Activated CD4-positive, alpha-beta T cell treated with anti-CD3 and anti-CD28 coated beads for 36 hours (primary cell): ENCODE measurements at regions of chr6 and their contacts with region 1.

Region 1: GRCh38 chr6:20919677-20920385 is 385.6 kb downstream of the CDKAL1 start:
- DNase-seq: peak; percentile 35
- ATAC-seq: peak; percentile 94
- H3K4me3 Mint-ChIP-seq: no peak overlapping the region
- H3K27ac Mint-ChIP-seq: peak overlapping the region; percentile 49
- H3K4me1 Mint-ChIP-seq: peaks cover 23% of the 10 kb centered on the region
- H3K27me3 Mint-ChIP-seq: no peaks in the 10 kb centered on the region

Region 2: GRCh38 chr6:20534295-20535262 is 385.3 kb before region 1 on chr6 and contains the start of gene CDKAL1:
- CTCF ChIA-PET with region 1: no interaction called
- POLR2A ChIA-PET with region 1: no interaction called
- intact Hi-C with region 1: loop called in 1 of 2 experiments (anchors 2 kb)
- DNase-seq: peak; percentile 94
- ATAC-seq: peak; percentile 89
- H3K4me3 Mint-ChIP-seq: peak within 1 kb of the TSS; percentile 94
- H3K27ac Mint-ChIP-seq: peak within 1 kb of the TSS; percentile 97
- H3K4me1 Mint-ChIP-seq: peaks cover 36% of the 10 kb centered on the region
- H3K27me3 Mint-ChIP-seq: no peaks in the 10 kb centered on the region
- total RNA-seq, gene CDKAL1: 22.1 to 23.4 TPM

Region 3: GRCh38 chr6:20582586-20583446 is 337.0 kb before region 1 on chr6:
- CTCF ChIA-PET with region 1: no interaction called
- POLR2A ChIA-PET with region 1: no interaction called
- intact Hi-C with region 1: loop called in 1 of 2 experiments (anchors 5 kb)
- DNase-seq: no peak
- ATAC-seq: peak; percentile 86
- H3K4me3 Mint-ChIP-seq: no peak overlapping the region
- H3K27ac Mint-ChIP-seq: no peak overlapping the region
- H3K4me1 Mint-ChIP-seq: peaks cover 26% of the 10 kb centered on the region
- H3K27me3 Mint-ChIP-seq: no peaks in the 10 kb centered on the region

Region 4: DNA sequence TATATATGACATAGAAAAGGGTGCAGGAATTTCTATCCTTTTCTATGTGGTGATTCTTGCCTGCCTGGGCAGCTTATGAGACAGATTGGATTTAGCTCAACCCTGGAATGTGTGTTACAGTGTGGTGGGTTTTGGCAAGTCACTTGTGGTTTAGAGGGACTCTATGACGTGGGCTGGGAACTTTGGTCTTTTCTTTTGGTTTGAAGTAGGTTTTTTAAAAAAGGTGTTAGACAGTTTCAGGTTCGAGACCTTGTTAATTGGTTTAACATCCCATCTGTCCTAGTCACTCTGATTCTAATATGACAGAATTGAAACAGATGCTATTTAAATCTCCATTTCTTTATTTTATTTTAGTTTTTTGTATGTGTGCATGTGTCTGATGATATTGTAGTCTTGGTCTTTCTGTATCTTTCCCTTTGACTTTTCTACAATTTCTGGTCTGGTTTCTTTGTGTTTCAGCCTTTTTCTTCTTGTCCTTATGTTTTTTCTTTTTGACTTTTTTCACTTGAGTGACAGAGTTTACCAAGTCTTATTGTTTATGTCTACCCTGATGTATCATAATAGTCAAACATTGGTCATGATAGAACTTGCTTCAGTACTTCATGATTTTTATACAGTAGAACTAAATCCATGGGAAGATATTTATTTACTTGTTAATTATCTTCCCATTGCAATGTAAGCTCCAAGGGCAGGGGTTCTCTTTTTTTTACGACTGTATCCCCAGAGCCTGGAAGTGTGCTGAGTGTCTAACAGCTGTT is 211.3 kb before region 1 on chr6:
- CTCF ChIA-PET with region 1: no interaction called
- POLR2A ChIA-PET with region 1: no interaction called
- intact Hi-C with region 1: loop called (anchors 5 kb)
- DNase-seq: peak; percentile 49
- ATAC-seq: peak; percentile 43
- H3K4me3 Mint-ChIP-seq: no peak overlapping the region
- H3K27ac Mint-ChIP-seq: peak overlapping the region; percentile 23
- H3K4me1 Mint-ChIP-seq: peaks cover 55% of the 10 kb centered on the region
- H3K27me3 Mint-ChIP-seq: no peaks in the 10 kb centered on the region

Region 5: GRCh38 chr6:20789162-20789561 is 130.7 kb before region 1 on chr6:
- CTCF ChIA-PET with region 1: no interaction called
- POLR2A ChIA-PET with region 1: no interaction called
- intact Hi-C with region 1: no loop called
- DNase-seq: no peak
- ATAC-seq: no peak
- H3K4me3 Mint-ChIP-seq: no peak overlapping the region
- H3K27ac Mint-ChIP-seq: no peak overlapping the region
- H3K4me1 Mint-ChIP-seq: peaks cover 4% of the 10 kb centered on the region
- H3K27me3 Mint-ChIP-seq: no peaks in the 10 kb centered on the region

Region 6: DNA sequence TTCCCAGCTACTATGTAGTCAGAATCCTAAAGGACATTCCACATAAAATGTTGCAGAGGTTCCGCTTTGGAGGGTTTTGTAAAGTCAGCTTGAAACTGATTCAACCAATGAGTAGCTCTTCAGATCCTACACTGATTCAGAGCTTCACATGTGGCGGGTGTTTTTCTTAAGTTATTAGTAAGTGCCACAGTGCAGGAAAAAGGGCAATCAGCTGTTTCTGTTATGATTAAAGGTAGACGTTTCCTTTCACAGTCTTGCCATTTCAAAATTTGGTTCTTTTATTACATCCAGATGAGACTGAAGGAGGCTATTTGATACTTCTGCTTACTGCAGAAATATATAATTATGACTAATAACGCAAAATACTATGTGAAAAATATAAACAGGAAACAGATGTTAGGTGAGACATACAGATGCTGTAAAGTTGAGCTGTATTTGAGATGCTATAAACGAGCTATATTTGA is 58.4 kb after region 1 on chr6:
- CTCF ChIA-PET with region 1: no interaction called
- POLR2A ChIA-PET with region 1: interaction called, 5 read pairs
- intact Hi-C with region 1: loop called in 1 of 2 experiments (anchors 1 kb)
- DNase-seq: peak; percentile 10
- ATAC-seq: peak; percentile 84
- H3K4me3 Mint-ChIP-seq: no peak overlapping the region
- H3K27ac Mint-ChIP-seq: no peak overlapping the region
- H3K4me1 Mint-ChIP-seq: peaks cover 5% of the 10 kb centered on the region
- H3K27me3 Mint-ChIP-seq: no peaks in the 10 kb centered on the region